ENCODE measurements at regions of chr19 and their contacts with region 1.

Region 1: DNA sequence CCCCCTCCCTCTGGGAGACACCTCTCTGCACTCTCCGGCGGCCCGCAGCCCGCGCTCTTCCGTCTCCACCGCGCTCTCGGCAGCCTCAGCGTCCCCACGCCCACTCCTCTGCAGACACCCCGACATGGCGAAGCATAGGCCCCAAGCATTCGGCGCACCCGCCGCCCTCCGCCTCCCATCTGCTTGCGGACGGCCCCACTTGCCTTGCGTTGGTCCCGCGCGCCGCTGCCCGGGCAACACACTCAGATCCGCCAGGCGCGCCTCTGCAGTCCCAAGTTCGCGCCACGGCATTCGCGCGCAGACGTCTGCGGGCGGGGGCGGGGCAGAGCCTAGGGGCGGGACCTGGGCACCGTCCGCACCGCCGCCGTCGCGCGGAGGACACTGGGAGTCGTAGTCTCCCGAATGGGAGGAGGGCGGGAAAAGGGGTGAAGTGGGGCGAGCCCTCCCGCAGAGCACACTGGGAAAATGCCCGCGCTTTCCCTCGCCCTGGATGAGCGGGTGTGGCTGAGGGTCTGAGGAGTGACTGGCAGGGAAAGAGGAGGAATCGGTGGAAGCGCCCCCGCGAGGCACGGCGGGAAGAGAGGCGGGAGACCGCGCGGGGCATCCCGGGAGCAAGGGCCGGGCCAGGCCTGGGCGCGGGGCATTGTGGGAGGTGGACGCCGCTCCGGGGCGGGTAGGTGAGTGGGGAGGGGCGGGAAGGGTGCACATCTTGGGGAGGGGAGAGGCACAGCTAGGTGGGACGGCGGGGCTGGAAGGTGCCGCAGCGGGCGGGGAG is at the starts of genes LIG1 and ZSWIM9:
- DNase-seq: peak; percentile 97
- ATAC-seq: peak; percentile 80
- H3K4me3 ChIP-seq: peak within 1 kb of the TSS; percentile 41 to 99 (median 90)
- H3K4me3 Mint-ChIP-seq: peak within 1 kb of the TSS; percentile 96
- H3K27ac ChIP-seq: peak within 1 kb of the TSS; percentile 86 to 87
- H3K27ac Mint-ChIP-seq: peak within 1 kb of the TSS; percentile 98
- H3K4me1 ChIP-seq: peaks cover 10 to 15% of the 10 kb centered on the region in 2 donors
- H3K4me1 Mint-ChIP-seq: peaks cover 25% of the 10 kb centered on the region
- H3K27me3 ChIP-seq: no peaks in the 10 kb centered on the region
- H3K27me3 Mint-ChIP-seq: no peaks in the 10 kb centered on the region
- CTCF ChIP-seq: no peak
- total RNA-seq, gene LIG1: 111 and 116 TPM in 2 replicates
- total RNA-seq, gene ZSWIM9: 11.8 and 15.7 TPM in 2 replicates

Region 2: DNA sequence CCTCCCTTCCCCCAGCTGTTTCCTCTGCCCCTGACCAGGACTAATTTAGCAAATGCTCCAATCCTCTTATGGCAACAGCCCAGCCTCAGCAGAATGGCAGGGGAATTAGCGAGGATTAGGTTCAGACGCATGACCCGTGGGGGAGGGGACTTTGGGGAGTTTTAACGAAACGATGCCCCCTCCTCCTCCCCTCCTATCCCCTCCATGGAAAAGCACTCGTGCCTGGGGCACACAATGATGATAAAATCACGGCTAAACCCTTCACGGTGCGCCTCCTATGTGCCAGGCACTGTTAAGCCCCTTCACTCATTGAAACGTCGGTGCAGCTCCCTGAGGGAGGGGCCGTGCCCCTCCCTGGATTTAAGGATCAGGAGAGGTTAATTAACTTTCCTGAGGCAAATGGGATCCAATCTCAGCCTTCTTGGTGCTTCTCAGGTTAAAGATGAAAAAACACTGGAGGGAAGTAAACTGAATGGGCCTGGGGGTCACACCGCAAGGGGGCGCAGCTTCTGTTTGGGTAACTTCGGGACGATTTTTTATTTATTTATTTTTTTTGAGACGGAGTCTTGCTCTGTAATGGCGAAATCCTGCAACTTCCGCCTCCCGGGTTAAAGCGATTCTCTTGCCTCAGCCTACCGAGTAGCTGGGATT is 321.3 kb before region 1 on chr19:
- CTCF ChIA-PET with region 1: no interaction called
- POLR2A ChIA-PET with region 1: no interaction called
- intact Hi-C with region 1: no loop called
- DNase-seq: no peak
- ATAC-seq: no peak
- H3K4me3 ChIP-seq: no peak overlapping the region
- H3K4me3 Mint-ChIP-seq: no peak overlapping the region
- H3K27ac ChIP-seq: no peak overlapping the region
- H3K27ac Mint-ChIP-seq: no peak overlapping the region
- H3K4me1 ChIP-seq: no peaks in the 10 kb centered on the region
- H3K4me1 Mint-ChIP-seq: peaks cover 3% of the 10 kb centered on the region
- H3K27me3 ChIP-seq: peaks cover 0 to 20% (median 4%) of the 10 kb centered on the region in 4 experiments
- H3K27me3 Mint-ChIP-seq: peaks cover 42% of the 10 kb centered on the region
- CTCF ChIP-seq: peak; percentile 25

Region 3: GRCh38 chr19:48624067-48624594 is 453.9 kb after region 1 on chr19:
- CTCF ChIA-PET with region 1: no interaction called
- POLR2A ChIA-PET with region 1: interaction called, 3 read pairs
- intact Hi-C with region 1: loop called (anchors 1 kb)
- DNase-seq: peak; percentile 96
- ATAC-seq: peak; percentile 75
- H3K4me3 ChIP-seq: peak overlapping the region in 4 of 5 experiments; percentile 29 to 60 (median 50)
- H3K4me3 Mint-ChIP-seq: peak overlapping the region; percentile 78
- H3K27ac ChIP-seq: peak overlapping the region; percentile 30 to 63
- H3K27ac Mint-ChIP-seq: peak overlapping the region; percentile 84
- H3K4me1 ChIP-seq: peaks cover 19 to 30% of the 10 kb centered on the region in 2 donors
- H3K4me1 Mint-ChIP-seq: peaks cover 38% of the 10 kb centered on the region
- H3K27me3 ChIP-seq: no peaks in the 10 kb centered on the region
- H3K27me3 Mint-ChIP-seq: no peaks in the 10 kb centered on the region
- CTCF ChIP-seq: no peak

Measured in B cell (primary cell).